ENCODE measurements at regions of chr2 and their contacts with region 1.

Region 1: DNA sequence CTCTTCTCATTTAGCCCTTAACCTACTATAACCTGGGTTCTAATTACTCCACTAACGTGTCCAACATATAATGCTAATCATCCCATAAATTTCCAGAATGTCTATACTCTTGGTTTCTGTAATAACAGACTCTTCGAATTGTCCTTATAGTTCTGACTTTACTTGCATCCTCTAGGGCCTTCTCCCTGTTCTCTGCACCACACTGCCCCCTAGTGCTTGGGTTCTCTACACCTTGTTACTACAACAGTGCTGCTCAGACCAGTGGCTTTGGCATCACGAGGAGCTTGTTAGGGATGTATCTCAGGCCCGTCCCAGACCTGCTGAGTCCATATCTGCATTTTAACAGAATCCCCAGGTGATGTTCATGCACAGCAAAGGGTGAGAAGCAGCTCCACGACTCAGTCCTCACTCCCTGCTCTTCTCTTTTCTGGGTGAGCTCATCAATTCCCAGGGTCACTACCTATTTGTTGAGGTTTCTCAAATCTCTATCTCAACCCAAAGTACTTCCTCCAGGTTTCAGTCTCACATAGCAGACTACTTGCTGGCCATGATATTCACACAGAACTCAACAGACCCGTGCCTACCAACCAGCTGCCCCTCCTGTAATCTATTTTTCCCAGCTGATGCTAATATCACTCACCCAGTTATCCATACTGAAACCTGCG is 14.5 kb upstream of the DDX1 start:
- DNase-seq: peak; percentile 74 to 95
- H3K4me3 ChIP-seq: no peak overlapping the region
- H3K27ac ChIP-seq: no peak overlapping the region
- H3K4me1 ChIP-seq: no peaks in the 10 kb centered on the region
- H3K27me3 ChIP-seq: no peaks in the 10 kb centered on the region
- CTCF ChIP-seq: peak; percentile 66 to 90 (median 85)
- EP300 ChIP-seq: no peak
- POLR2A ChIP-seq: no peak
- RAD21 ChIP-seq: peak; percentile 89 to 90

Region 2: GRCh38 chr2:15560988-15561573 is 16.1 kb before region 1 on chr2 and contains the start of gene NBAS:
- CTCF ChIA-PET with region 1: interaction called, 42 read pairs
- POLR2A ChIA-PET with region 1: interaction called, 7 read pairs
- DNase-seq: peak; percentile 38 to 86
- H3K4me3 ChIP-seq: peak within 1 kb of the TSS; percentile 88 to 98 (median 96)
- H3K27ac ChIP-seq: no peak within 1 kb of the TSS
- H3K4me1 ChIP-seq: peaks cover 0 to 4% (median 0%) of the 10 kb centered on the region in 4 experiments; a peak in 1 of 7 replicates
- H3K27me3 ChIP-seq: no peaks in the 10 kb centered on the region
- CTCF ChIP-seq: no peak
- EP300 ChIP-seq: 0 out of 3 replicates have a peak, but pooled peaks of 1 of the 2 experiments have one; percentile 33
- POLR2A ChIP-seq: peak; percentile 29 to 71
- RAD21 ChIP-seq: no peak
- total RNA-seq, gene NBAS: 34.1 and 34.8 TPM in 2 replicates

Region 3: DNA sequence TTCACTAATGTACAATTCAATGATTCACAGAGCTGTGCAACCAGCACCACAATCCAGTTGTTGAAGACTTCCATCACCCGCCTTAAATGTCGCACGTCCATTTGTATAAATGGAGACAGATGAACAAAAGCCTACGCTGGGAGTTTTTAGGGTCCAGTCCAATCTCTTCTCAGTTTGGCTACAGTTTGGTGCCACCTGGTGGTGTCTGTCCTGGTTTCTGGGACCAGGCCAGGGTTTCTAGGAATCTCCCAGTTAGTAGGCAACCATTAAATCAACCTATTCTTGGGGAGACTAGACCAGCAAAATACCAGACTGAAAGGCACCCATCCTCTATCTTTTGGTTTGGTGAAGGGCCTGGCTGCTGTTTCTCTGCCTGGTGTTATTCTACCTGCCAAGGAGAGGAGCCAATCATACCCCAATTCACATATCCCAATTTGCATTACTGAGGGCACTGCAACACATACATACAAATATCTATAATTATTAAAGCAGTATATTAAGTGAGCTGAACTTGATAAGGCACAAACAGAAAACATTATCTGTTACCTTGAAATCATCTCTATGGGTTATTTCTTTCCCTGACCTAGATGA is 11.2 kb after region 1 on chr2:
- CTCF ChIA-PET with region 1: interaction called, 51 read pairs
- POLR2A ChIA-PET with region 1: interaction called, 8 read pairs
- DNase-seq: peak; percentile 3 to 81
- H3K4me3 ChIP-seq: no peak overlapping the region
- H3K27ac ChIP-seq: no peak overlapping the region
- H3K4me1 ChIP-seq: peaks cover 0 to 3% (median 1%) of the 10 kb centered on the region in 4 experiments; a peak in 3 of 7 replicates
- H3K27me3 ChIP-seq: no peaks in the 10 kb centered on the region
- CTCF ChIP-seq: peak; percentile 52 to 72 (median 64)
- EP300 ChIP-seq: no peak
- POLR2A ChIP-seq: no peak
- RAD21 ChIP-seq: peak; percentile 78 to 84

Measured in H1 (cell line).